A549 (cell line): ENCODE measurements at regions of chr5 and their contacts with region 1.

Region 1: GRCh38 chr5:149828161-149828884 is 98.2 kb downstream of the PPARGC1B start:
- DNase-seq: peak; percentile 91 to 96
- ATAC-seq: peak; percentile 89 to 94
- H3K4me3 ChIP-seq: no peak overlapping the region
- H3K27ac ChIP-seq: peak overlapping the region; percentile 29 to 67; a peak in 4 of 6 replicates
- H3K4me1 ChIP-seq: peaks cover 5% of the 10 kb centered on the region; the same call in 1 of the 3 replicates
- CTCF ChIP-seq: peak; percentile 97
- EP300 ChIP-seq: no peak
- POLR2A ChIP-seq: no peak
- RAD21 ChIP-seq: peak; percentile 97

Region 2: DNA sequence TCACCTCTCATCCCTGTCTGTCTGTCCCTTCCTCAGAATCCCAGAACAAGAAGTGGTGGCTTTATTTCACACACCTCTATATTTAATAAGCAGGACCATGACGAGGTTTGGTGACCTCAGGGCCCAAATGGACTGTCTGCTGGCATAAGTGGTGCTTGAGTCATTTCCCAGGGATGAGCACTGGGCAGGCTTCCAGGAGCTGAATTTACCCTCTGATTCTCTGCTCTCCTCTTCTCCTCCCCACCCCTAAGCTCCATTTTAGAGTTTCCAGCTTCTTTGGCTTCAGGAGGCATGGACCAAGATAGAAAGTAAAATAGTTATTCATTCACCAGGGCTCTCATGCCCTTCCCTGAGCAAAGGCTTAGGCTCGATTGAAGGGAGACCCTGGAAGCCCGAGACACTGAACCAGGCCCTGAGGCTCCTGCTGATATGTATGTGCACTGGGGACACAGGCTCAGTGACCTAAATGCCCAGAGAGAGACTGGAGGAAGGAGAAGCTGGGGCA is 29.2 kb before region 1 on chr5:
- CTCF ChIA-PET with region 1: interaction called, 32 read pairs
- POLR2A ChIA-PET with region 1: no interaction called
- DNase-seq: peak; percentile 91 to 94
- ATAC-seq: peak; percentile 85 to 89
- H3K4me3 ChIP-seq: 0 out of 3 replicates have a peak overlapping the region, but pooled peaks have one; percentile 4
- H3K27ac ChIP-seq: peak overlapping the region; percentile 88 to 95
- H3K4me1 ChIP-seq: peaks cover 67% of the 10 kb centered on the region
- CTCF ChIP-seq: no peak
- EP300 ChIP-seq: no peak
- POLR2A ChIP-seq: no peak
- RAD21 ChIP-seq: no peak

Region 3: GRCh38 chr5:149809931-149810617 is 18.2 kb before region 1 on chr5:
- CTCF ChIA-PET with region 1: interaction called, 54 read pairs
- POLR2A ChIA-PET with region 1: no interaction called
- DNase-seq: no peak
- ATAC-seq: no peak
- H3K4me3 ChIP-seq: no peak overlapping the region
- H3K27ac ChIP-seq: 0 out of 6 replicates have a peak overlapping the region, but pooled peaks of 1 of the 2 experiments have one; percentile 21
- H3K4me1 ChIP-seq: peaks cover 19% of the 10 kb centered on the region
- CTCF ChIP-seq: no peak
- EP300 ChIP-seq: no peak
- POLR2A ChIP-seq: no peak
- RAD21 ChIP-seq: no peak